ENCODE measurements at regions of chr5 and their contacts with region 1.

Region 1: DNA sequence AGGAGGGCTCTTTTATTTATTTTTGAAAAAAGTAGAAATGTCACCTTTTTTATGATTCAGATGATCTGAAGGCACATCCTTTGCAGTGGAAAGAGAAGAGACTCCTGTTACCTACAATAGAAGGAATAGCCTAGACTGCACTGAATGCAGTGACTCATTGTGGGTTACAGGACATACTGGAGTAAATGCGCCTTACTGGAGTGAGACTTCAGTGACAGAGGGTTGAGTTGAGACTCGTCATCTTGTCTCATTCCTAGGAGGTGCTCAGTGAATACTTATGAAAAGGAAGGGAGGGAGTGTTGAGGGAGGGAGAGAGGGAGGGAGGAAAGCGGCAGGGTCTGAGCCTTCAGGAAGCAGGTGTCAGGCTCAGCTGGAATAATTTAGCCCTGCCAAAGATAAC is 25.2 kb downstream of the ANKRA2 start:
- DNase-seq: no peak
- CTCF ChIP-seq: no peak

Region 2: GRCh38 chr5:72799721-72800120 is 740.5 kb before region 1 on chr5:
- CTCF ChIA-PET with region 1: no interaction called
- POLR2A ChIA-PET with region 1: no interaction called
- DNase-seq: no peak
- CTCF ChIP-seq: no peak

Region 3: GRCh38 chr5:73501406-73501805 is 38.8 kb before region 1 on chr5:
- CTCF ChIA-PET with region 1: no interaction called
- POLR2A ChIA-PET with region 1: no interaction called
- DNase-seq: no peak
- CTCF ChIP-seq: no peak

Region 4: GRCh38 chr5:73565139-73565968 is 25.2 kb after region 1 on chr5 and contains the starts of genes ANKRA2 and UTP15:
- CTCF ChIA-PET with region 1: interaction called, 10 read pairs
- POLR2A ChIA-PET with region 1: no interaction called
- DNase-seq: peak; percentile 92
- CTCF ChIP-seq: no peak

Region 5: DNA sequence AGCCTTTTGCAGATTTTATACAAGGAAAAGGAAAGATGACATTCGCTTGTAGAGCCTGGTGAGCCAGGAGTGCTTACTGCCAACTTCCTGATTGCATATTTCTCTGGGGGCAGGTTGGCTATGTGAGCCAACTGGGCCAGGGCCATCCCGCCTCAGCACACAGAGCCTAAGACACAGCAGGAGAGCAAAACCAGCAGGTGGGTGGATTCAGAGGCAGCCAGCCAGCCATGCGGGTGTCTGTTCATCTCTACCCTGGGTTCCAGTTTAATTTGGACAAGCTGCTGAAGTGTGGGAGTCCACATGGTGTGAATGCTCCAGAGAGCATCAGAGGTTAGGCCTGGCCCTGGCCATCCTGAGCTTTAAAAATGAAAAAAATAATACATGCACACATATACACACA is 377.2 kb after region 1 on chr5:
- CTCF ChIA-PET with region 1: no interaction called
- POLR2A ChIA-PET with region 1: no interaction called
- DNase-seq: no peak
- CTCF ChIP-seq: no peak

Region 6: GRCh38 chr5:73974871-73975360 is 434.7 kb after region 1 on chr5:
- CTCF ChIA-PET with region 1: no interaction called
- POLR2A ChIA-PET with region 1: no interaction called
- DNase-seq: no peak
- CTCF ChIP-seq: no peak